ENCODE measurements at regions of chr9 and their contacts with region 1.

Region 1: DNA sequence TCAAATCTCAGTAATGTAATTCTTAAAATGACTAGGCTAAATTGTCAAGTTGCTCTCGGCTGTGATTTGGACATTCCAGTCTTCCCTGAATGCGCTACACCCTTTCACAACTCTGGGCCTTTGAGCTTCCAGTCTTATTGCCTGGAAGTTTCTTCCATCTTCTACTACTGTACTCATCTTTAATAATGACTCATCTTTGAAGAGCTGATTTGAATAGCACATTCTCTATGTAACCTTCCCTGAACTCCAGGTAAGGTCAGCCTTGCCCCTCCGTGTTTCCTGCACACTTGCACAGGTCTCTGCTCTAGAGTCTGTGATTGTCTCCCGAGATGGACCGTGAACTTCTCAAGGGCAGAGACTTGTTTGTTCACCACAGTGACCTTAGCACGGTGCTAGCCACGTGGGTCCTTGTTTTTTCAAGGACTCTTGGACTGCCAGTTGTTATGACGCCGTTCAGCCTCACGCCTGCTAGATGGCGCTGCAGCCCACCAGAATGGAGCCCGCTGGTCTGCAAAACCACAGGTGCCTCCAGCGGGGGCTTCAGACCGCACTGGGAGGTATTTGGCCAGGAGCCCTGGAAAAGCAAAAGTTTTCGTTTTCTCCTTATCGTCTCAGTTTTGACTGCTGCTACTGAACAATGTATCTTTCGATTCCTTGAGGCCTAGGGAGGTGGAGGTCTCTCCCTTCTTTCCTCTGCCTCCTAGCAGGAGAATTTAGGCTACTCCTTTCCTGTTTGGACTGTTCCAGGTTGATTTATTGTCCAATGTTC is 44.4 kb downstream of the SEC61B start:
- DNase-seq: peak; percentile 20
- H3K4me3 ChIP-seq: no peak overlapping the region
- H3K27ac ChIP-seq: no peak overlapping the region
- H3K4me1 ChIP-seq: no peaks in the 10 kb centered on the region
- H3K27me3 ChIP-seq: no peaks in the 10 kb centered on the region
- CTCF ChIP-seq: peak; percentile 35 to 63 (median 48)
- POLR2A ChIP-seq: no peak

Region 2: DNA sequence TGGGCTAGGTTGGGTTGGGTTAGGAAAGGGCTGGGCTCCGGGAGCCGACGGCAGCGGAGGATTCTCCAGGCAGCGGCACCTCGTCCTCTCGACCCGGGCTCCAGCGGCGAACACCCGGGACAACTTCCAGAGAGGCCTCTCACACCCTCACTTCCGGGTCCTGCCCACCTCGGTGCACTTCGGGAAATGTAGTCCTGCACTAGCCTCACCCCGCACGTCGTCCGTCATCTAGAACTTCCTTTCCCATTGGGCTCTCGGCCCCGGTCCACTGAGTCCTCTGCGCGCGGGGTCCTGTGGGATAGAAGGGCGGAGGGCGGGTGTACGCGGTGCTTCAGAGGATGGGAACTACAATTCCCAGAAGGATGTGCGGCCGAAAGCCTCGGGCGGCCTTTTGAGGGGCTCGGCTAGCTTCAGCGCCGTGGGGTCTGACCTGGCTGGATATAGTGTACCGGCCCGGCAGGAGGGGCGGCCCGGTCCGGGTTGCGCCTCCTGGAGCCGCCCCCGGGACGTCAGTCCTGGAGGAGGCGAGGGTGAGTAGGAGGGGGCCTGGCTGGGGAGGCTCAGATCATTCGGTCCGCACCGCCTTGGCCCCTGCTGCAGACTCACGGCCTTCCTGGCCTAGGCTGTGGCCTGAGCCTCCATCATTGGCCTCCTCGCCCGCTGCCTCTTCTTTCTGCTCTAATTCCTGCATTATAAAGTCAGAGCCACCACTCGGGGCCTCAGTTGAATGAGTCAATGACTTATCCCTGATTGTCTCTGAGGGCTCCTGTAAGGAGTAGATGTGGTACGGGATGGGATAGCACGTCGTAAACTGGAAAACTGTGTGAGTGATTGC is 832.7 kb after region 1 on chr9 and contains the starts of genes ERP44 and INVS:
- intact Hi-C with region 1: loop called (anchors 10 kb)
- DNase-seq: peak; percentile 100
- H3K4me3 ChIP-seq: peak within 1 kb of the TSS; percentile 90 to 91
- H3K27ac ChIP-seq: peak within 1 kb of the TSS; percentile 83
- H3K4me1 ChIP-seq: peaks cover 17% of the 10 kb centered on the region
- H3K27me3 ChIP-seq: no peaks in the 10 kb centered on the region
- CTCF ChIP-seq: no peak
- POLR2A ChIP-seq: peak; percentile 69
- total RNA-seq, gene ERP44: 16.6 to 20.6 TPM
- total RNA-seq, gene INVS: 17.7 to 29.7 TPM